ENCODE measurements at regions of chr16 and their contacts with region 1.

Region 1: GRCh38 chr16:68064791-68065365 is 20.3 kb upstream of the NFATC3 start:
- DNase-seq: peak; percentile 78 to 91
- ATAC-seq: peak; percentile 79 to 87 (median 85)
- H3K4me3 ChIP-seq: no peak overlapping the region
- H3K27ac ChIP-seq: peak overlapping the region; percentile 92
- H3K4me1 ChIP-seq: peaks cover 52% of the 10 kb centered on the region
- H3K27me3 ChIP-seq: no peaks in the 10 kb centered on the region
- CTCF ChIP-seq: peak; percentile 85

Region 2: GRCh38 chr16:67816240-67817031 is 248.4 kb before region 1 on chr16:
- intact Hi-C with region 1: loop called in 1 of 2 experiments (anchors 1 kb)
- DNase-seq: peak; percentile 85 to 93
- ATAC-seq: peak; percentile 97 to 100 (median 98)
- H3K4me3 ChIP-seq: no peak overlapping the region
- H3K27ac ChIP-seq: peak overlapping the region; percentile 62
- H3K4me1 ChIP-seq: peaks cover 3% of the 10 kb centered on the region
- H3K27me3 ChIP-seq: no peaks in the 10 kb centered on the region
- CTCF ChIP-seq: peak; percentile 100

Region 3: GRCh38 chr16:67993189-67994039 is 71.5 kb before region 1 on chr16:
- intact Hi-C with region 1: loop called (anchors 5 kb)
- DNase-seq: peak; percentile 85 to 93
- ATAC-seq: peak; percentile 74 to 85 (median 80)
- H3K4me3 ChIP-seq: peak overlapping the region; percentile 64
- H3K27ac ChIP-seq: peak overlapping the region; percentile 81
- H3K4me1 ChIP-seq: peaks cover 46% of the 10 kb centered on the region
- H3K27me3 ChIP-seq: no peaks in the 10 kb centered on the region
- CTCF ChIP-seq: peak; percentile 100

Measured in psoas muscle (tissue), 8 donors.